Activated CD8-positive, alpha-beta memory T cell treated with anti-CD3 and anti-CD28 coated beads, Interleukin-2, amount 10 ng/mL, durations not matched to agents 7 days and 5 days (primary cell): ENCODE measurements at regions of chr15 and their contacts with region 1.

Region 1: DNA sequence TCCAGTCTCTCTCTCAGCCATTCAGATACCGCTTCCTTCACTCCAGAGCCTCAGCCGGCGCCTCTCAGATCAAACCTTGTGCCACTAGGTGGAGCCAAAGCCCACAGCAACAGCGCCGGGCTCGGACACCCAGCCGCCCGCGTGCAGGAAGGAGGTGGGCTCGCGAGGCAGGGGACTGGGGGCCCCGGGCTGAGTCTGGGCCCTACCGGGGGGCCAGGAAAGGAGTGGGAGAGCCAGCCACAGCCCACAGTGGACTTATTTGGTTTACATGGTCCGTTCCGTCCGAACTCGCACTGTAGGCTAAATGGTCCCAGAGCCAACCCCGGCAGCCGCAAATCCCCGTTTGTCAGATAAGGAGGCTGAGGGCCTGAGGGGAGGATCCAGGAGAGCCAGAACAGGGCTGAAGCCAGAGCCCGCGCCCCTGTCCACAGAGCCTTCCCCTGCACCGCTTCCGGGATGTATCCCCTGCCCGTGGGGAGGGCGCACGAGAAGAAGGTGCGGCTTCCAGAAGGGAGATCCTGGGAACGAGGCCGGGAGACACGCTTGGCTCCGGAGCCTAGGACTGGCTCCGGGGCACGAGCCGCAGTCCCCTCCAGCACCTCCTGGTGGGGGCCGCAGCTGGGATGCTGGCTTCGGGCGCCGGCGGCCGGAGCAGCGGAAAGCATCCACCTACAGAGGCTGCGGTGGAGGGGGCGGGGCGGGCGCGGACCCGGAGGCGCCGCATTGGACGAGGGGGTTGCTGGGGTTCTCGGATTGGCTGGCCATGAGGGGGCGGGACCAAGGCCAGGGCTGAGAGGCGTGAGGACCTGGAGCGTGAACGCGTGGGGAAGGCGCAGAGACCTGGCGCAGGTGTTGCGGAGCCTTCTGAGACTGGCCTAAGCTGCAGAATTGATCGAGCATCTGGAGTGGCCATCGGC is 6.5 kb upstream of the CYP11A1 start:
- DNase-seq: peak; percentile 97
- ATAC-seq: peak; percentile 96
- H3K4me3 Mint-ChIP-seq: peak overlapping the region; percentile 73
- H3K27ac Mint-ChIP-seq: peak overlapping the region; percentile 75
- H3K4me1 Mint-ChIP-seq: peaks cover 22% of the 10 kb centered on the region
- H3K27me3 Mint-ChIP-seq: peaks cover 33% of the 10 kb centered on the region

Region 2: DNA sequence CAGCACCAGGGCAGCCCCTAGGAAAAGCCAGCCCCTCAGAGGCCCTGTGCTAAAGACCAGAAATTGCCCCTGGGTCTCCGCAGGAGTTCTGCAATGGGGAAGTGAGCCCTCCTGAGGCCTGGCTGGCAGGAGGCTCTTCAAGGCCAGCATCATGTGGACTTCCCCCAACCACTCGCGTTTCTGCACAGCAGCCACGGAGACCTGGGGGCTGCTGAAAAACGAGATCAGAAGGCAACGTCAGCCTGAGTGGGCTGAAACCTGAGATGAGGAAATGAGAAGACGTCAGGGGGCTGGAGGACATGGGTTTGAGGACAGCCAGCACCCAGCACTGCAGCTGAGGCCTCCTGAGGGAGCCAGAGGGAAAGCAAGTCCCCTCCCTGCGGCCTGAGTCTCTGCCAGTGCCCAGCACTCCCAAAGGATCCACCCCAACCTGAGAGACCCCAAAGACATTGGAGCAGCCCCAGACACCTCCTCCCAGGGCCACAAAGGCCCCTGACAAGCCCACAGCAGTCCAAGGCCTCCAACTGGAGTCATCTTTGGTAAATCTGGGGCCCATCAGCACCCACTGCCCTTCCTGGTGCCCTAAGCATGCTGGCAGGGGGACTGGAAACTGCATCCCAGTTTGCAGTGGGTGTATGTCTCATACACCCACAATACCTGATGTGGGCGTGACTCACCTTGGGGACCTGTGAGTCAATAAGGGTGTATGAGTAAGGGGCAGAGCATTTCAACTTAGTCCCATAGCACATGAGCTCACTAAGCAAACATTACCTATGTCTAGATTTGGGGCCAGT is 22.7 kb after region 1 on chr15:
- CTCF ChIA-PET with region 1: interaction called, 10 read pairs
- DNase-seq: peak; percentile 56
- ATAC-seq: no peak
- H3K4me3 Mint-ChIP-seq: no peak overlapping the region
- H3K27ac Mint-ChIP-seq: peak overlapping the region; percentile 85
- H3K4me1 Mint-ChIP-seq: peaks cover 74% of the 10 kb centered on the region
- H3K27me3 Mint-ChIP-seq: no peaks in the 10 kb centered on the region

Region 3: DNA sequence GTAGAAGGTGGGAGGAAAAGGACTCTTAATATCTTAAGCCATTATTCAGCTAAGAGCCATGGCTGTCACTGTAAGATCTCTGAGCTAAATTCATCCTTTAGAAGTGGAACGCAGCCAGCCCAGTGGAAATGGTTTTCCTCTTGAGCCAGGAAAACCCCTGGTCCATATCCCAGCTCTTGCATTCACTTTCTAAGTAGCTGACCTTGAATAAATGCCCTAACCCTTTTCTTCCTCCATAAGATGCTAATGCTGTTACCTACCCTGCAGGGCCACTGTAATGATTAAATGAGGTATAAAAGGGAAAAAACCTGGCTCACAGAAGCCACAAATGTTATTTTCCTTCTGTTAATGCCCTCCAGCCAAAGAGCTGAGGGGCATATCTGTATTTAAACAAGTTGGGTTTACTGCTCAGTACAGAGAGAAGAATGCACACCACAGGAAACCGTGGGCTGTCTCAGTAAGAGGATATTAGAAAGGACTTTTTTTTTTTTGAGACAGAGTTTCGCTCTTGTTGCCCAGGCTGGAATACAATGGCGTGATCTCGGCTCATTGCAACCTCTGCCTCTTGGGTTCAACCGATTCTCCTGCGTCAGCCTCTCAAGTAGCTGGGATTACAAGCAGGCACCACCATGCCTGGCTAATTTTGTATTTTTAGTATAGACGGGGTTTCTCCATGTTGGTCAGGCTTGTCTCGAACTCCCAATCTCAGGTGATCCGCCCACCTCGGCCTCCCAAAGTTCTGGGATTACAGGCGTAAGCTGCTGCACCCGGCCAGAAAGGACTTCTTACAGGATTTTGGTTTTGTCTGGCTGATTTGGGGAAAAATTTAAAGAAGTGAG is 80.2 kb after region 1 on chr15:
- CTCF ChIA-PET with region 1: interaction called, 16 read pairs
- DNase-seq: no peak
- ATAC-seq: peak; percentile 85
- H3K4me3 Mint-ChIP-seq: no peak overlapping the region
- H3K27ac Mint-ChIP-seq: peak overlapping the region; percentile 76
- H3K4me1 Mint-ChIP-seq: peaks cover 38% of the 10 kb centered on the region
- H3K27me3 Mint-ChIP-seq: no peaks in the 10 kb centered on the region

Region 4: DNA sequence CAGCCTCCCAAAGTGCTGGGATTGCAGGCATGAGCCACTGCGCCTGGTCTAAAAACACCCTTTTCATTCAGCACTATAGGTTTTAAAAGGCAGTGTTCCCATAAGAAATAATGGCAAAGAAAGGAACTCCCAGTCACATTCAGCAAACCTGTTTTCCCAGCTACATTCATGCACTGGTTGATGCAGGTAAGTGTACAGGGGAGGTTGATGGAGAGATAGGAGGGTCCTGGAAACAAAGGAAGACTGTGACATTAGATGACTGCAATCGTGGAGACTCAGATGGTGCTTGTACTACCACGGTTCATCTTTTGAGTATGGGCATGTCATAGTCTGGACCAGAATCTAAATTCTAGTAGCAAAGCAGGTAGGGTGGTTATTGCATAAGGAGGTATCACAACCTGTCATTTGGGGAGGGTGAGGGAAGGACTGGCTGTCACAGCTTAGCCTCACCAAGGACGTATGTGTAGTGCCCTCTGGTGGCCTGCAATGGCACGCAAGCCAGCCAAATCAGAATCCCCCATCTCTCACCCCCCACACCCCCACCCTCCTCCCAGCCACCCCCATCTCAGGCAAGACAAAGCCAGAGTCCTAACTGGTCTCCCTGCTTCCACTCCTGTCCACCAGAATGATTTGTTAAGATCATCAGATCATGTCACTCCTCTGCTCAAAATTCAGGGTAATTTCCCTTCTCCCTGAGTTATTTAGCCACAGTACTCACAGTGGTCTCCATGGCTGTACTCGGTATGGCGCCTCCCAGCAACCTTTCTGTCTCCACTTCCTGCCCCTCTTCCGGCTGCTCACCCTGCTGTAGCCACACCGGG is 115.7 kb after region 1 on chr15:
- CTCF ChIA-PET with region 1: interaction called, 30 read pairs
- DNase-seq: peak; percentile 88
- ATAC-seq: peak; percentile 92
- H3K4me3 Mint-ChIP-seq: peak overlapping the region; percentile 40
- H3K27ac Mint-ChIP-seq: peak overlapping the region; percentile 84
- H3K4me1 Mint-ChIP-seq: peaks cover 26% of the 10 kb centered on the region
- H3K27me3 Mint-ChIP-seq: no peaks in the 10 kb centered on the region

Region 5: GRCh38 chr15:74615508-74616365 is 241.7 kb after region 1 on chr15 and contains the start of gene CLK3:
- CTCF ChIA-PET with region 1: interaction called, 40 read pairs
- DNase-seq: peak; percentile 97
- ATAC-seq: peak; percentile 85
- H3K4me3 Mint-ChIP-seq: peak within 1 kb of the TSS; percentile 92
- H3K27ac Mint-ChIP-seq: peak within 1 kb of the TSS; percentile 97
- H3K4me1 Mint-ChIP-seq: peaks cover 38% of the 10 kb centered on the region
- H3K27me3 Mint-ChIP-seq: no peaks in the 10 kb centered on the region
- total RNA-seq, gene CLK3: 120 to 140 TPM

Region 6: DNA sequence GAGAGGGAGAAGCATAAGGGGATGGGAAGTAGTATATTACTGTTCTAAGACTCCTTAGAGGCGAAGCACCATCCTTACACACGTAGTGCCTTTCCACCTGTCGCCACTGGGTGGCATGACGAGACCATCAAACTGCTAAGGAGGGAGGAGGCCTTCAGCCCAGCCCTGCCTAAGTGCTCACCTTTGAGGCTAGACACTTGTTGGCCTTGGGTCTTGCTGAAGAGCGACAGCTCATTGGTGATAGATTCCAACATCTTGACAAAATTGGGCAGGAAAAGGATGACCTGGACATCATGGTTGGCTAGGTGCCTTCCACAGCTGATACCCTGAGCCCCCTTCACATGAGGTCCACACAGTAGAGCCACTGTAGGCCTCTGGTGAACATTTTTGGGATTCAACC is 261.2 kb after region 1 on chr15:
- CTCF ChIA-PET with region 1: interaction called, 107 read pairs
- DNase-seq: peak; percentile 84
- ATAC-seq: peak; percentile 90
- H3K4me3 Mint-ChIP-seq: no peak overlapping the region
- H3K27ac Mint-ChIP-seq: no peak overlapping the region
- H3K4me1 Mint-ChIP-seq: no peaks in the 10 kb centered on the region
- H3K27me3 Mint-ChIP-seq: no peaks in the 10 kb centered on the region